ENCODE measurements at regions of chr1 and their contacts with region 1.

Region 1: GRCh38 chr1:19240673-19241538 is 10.4 kb downstream of the EMC1 start:
- DNase-seq: peak; percentile 81
- CTCF ChIP-seq: peak; percentile 97

Region 2: GRCh38 chr1:18883636-18884418 is 357.1 kb before region 1 on chr1:
- CTCF ChIA-PET with region 1: interaction called, 20 read pairs
- POLR2A ChIA-PET with region 1: no interaction called
- DNase-seq: peak; percentile 77
- CTCF ChIP-seq: peak; percentile 90

Region 3: GRCh38 chr1:19179597-19180264 is 61.2 kb before region 1 on chr1:
- CTCF ChIA-PET with region 1: interaction called, 14 read pairs
- POLR2A ChIA-PET with region 1: no interaction called
- DNase-seq: no peak
- CTCF ChIP-seq: peak; percentile 31

Region 4: DNA sequence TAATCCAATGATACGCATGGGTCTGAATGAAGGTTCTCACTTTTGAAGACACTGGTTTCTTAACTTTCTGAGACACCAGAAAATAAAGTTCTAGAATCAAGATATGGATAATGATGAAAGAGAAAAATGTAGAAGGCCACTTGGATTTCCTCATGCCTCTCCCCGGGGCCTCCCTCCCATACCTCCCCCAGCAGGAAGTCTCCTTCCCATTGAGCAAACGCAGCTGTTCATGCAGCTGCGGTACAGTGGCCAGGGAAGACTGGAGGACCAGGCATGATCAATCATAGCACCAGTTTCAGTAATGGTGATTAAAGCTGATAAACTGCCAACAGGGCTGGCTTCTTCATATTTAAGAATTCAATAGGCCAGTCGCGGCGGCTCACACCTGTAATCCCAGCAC is 19.9 kb before region 1 on chr1:
- CTCF ChIA-PET with region 1: interaction called, 13 read pairs
- POLR2A ChIA-PET with region 1: no interaction called
- DNase-seq: no peak
- CTCF ChIP-seq: no peak

Region 5: GRCh38 chr1:19251305-19252196 is 10.6 kb after region 1 on chr1 and contains the starts of genes EMC1 and MRTO4:
- CTCF ChIA-PET with region 1: interaction called, 21 read pairs
- POLR2A ChIA-PET with region 1: interaction called, 4 read pairs
- DNase-seq: peak; percentile 96
- CTCF ChIP-seq: no peak

Region 6: DNA sequence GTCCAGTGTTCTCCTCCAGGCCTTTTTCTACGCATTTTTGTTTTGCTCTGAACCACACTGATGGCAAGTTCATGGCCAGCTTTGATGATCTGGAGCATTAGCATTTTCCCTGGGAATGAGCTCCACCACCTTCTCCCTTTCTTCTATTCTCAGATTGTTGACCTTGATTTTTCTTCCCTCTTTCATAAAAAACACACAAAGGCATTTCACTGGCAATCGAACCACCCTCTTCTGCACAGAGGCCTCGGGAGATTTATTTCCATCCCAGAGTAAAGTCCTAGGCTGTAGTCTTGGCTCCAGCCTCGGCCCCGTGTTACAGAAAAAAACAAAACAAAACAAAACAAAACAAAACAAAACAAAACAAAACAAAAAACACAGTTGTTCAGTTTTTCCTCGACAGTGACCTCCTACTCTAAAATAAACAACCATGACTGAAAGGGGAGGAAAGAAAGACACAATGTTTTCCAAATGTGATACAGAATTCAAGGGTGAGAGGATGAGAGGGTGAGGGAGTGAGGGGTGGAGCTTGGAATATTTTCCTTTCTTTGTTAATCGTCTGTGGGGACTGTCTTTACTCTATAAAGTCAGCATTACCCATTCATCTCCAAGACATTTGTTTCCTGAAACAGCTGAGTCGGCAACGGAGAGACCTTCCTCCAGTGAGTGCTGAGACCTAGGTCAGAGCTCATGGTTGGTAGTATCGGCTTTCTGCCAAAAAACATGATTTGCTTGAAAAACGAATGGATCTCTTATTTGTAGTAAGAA is 604.0 kb after region 1 on chr1:
- CTCF ChIA-PET with region 1: no interaction called
- POLR2A ChIA-PET with region 1: no interaction called
- DNase-seq: no peak
- CTCF ChIP-seq: no peak

Measured in GM10248 (cell line).